Mammary epithelial cell (primary cell): ENCODE measurements at regions of chr3 and their contacts with region 1.

Region 1: GRCh38 chr3:172550347-172550943 is 27.2 kb upstream of the TNFSF10 start:
- DNase-seq: peak; percentile 98
- H3K4me3 ChIP-seq: no peak overlapping the region
- H3K27ac ChIP-seq: peak overlapping the region; percentile 71
- H3K4me1 ChIP-seq: peaks cover 26% of the 10 kb centered on the region
- H3K27me3 ChIP-seq: no peaks in the 10 kb centered on the region
- CTCF ChIP-seq: no peak

Region 2: GRCh38 chr3:172369590-172370259 is 180.7 kb before region 1 on chr3:
- CTCF ChIA-PET with region 1: no interaction called
- dilution Hi-C with region 1: no loop called
- in situ Hi-C with region 1: no loop called
- intact Hi-C with region 1: no loop called
- DNase-seq: no peak
- H3K4me3 ChIP-seq: no peak overlapping the region
- H3K27ac ChIP-seq: no peak overlapping the region
- H3K4me1 ChIP-seq: no peaks in the 10 kb centered on the region
- H3K27me3 ChIP-seq: no peaks in the 10 kb centered on the region
- CTCF ChIP-seq: no peak

Region 3: GRCh38 chr3:172511783-172512762 is 38.4 kb before region 1 on chr3:
- CTCF ChIA-PET with region 1: no interaction called
- dilution Hi-C with region 1: no loop called
- in situ Hi-C with region 1: no loop called
- intact Hi-C with region 1: loop called (anchors 5 kb)
- DNase-seq: no peak
- H3K4me3 ChIP-seq: no peak overlapping the region
- H3K27ac ChIP-seq: no peak overlapping the region
- H3K4me1 ChIP-seq: peaks cover 14% of the 10 kb centered on the region
- H3K27me3 ChIP-seq: no peaks in the 10 kb centered on the region
- CTCF ChIP-seq: no peak

Region 4: GRCh38 chr3:172595641-172596393 is 45.4 kb after region 1 on chr3:
- CTCF ChIA-PET with region 1: no interaction called
- dilution Hi-C with region 1: no loop called
- in situ Hi-C with region 1: no loop called
- intact Hi-C with region 1: loop called (anchors 1 kb)
- DNase-seq: peak; percentile 65
- H3K4me3 ChIP-seq: peak overlapping the region; percentile 11 to 23 (median 11)
- H3K27ac ChIP-seq: peak overlapping the region; percentile 28
- H3K4me1 ChIP-seq: peaks cover 8% of the 10 kb centered on the region
- H3K27me3 ChIP-seq: no peaks in the 10 kb centered on the region
- CTCF ChIP-seq: peak; percentile 86 to 90